Mammary epithelial cell (primary cell): ENCODE measurements at regions of chr7 and their contacts with region 1.

Region 1: GRCh38 chr7:26705567-26705966 is 158.8 kb downstream of the SKAP2 start:
- DNase-seq: peak; percentile 83
- H3K4me3 ChIP-seq: no peak overlapping the region
- H3K27ac ChIP-seq: peak overlapping the region; percentile 40
- H3K4me1 ChIP-seq: peaks cover 14% of the 10 kb centered on the region
- H3K27me3 ChIP-seq: no peaks in the 10 kb centered on the region
- CTCF ChIP-seq: no peak

Region 2: DNA sequence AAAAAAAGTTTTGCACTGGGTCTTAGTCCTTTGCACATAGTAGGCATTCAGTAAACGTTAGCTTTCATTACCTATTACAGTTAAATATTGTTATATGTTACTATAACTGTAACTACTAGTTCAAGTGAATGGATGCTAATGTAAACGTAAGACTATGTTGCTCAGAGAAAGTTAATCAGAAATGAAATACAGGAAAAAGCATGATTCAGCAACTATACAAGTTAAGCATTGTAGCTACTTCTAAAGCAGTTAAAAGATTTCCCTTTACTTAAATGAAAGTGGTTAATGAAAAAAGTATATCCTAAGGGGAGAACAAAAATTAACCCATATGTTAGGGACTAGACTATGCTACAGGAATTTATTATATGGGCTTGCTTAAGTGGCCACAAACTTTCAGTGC is 37.6 kb after region 1 on chr7:
- CTCF ChIA-PET with region 1: no interaction called
- dilution Hi-C with region 1: no loop called
- in situ Hi-C with region 1: no loop called
- intact Hi-C with region 1: loop called (anchors 5 kb)
- DNase-seq: no peak
- H3K4me3 ChIP-seq: no peak overlapping the region
- H3K27ac ChIP-seq: no peak overlapping the region
- H3K4me1 ChIP-seq: no peaks in the 10 kb centered on the region
- H3K27me3 ChIP-seq: no peaks in the 10 kb centered on the region
- CTCF ChIP-seq: no peak